ENCODE measurements at regions of chr6 and their contacts with region 1.

Region 1: DNA sequence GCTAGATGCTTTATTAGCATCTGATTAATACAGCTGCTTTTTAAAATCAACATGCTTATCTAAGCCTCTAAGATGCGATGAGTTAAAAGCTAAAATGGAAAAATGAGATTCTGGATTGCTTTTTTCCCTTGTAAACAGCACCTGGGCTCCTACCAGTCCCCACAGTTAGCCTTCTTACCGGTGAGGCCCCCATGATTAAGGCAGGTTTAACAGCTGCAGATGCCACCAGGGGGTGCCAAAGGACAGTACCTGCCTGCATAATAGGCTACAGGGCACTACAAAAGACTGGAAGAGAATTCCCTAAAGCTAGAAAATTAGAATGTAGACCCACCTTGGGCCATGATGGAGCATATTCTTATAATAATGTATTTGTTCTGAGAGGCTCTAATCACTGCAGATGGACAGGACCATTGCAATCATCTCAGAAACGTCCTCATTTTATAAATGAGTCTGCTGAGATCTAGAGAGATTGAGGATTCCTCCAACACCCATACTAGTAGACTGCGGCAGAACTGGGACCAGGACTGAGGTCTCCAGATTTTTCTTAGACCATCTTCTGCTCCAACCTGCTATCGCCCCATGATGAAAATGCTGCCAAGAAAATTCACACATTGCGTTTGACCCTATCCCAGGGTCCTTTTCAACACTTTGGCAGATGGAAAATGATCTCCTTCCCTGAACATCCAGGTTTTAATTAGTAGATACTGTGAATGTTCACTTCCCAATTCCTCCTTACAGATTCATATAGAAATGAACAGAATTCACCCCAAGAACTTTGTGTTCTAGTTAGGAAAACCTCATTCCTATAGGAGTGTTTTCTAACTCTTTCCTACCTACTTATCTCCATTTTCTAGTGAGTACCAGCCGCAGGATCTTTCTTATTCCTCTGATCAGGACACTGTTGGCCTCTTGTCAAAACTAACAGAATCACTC is 148.8 kb downstream of the RPS12 start:
- DNase-seq: no peak
- ATAC-seq: peak; percentile 97
- H3K4me3 ChIP-seq: no peak overlapping the region
- H3K27ac ChIP-seq: no peak overlapping the region
- H3K4me1 ChIP-seq: no peaks in the 10 kb centered on the region; the same call in 1 of the 2 replicates
- H3K27me3 ChIP-seq: no peaks in the 10 kb centered on the region
- CTCF ChIP-seq: peak; percentile 71 to 82 (median 73)
- EP300 ChIP-seq: no peak
- POLR2A ChIP-seq: no peak
- RAD21 ChIP-seq: peak; percentile 76

Region 2: GRCh38 chr6:132530293-132530974 is 432.8 kb before region 1 on chr6:
- CTCF ChIA-PET with region 1: interaction called, 3 read pairs
- POLR2A ChIA-PET with region 1: no interaction called
- RAD21 ChIA-PET with region 1: no interaction called
- SMC1A ChIA-PET with region 1: interaction called, 3 read pairs
- in situ Hi-C with region 1: no loop called
- intact Hi-C with region 1: loop called (anchors 1 kb)
- DNase-seq: peak; percentile 21
- ATAC-seq: peak; percentile 96
- H3K4me3 ChIP-seq: no peak overlapping the region
- H3K27ac ChIP-seq: no peak overlapping the region
- H3K4me1 ChIP-seq: no peaks in the 10 kb centered on the region
- H3K27me3 ChIP-seq: no peaks in the 10 kb centered on the region; a peak in 1 of 4 replicates
- CTCF ChIP-seq: peak; percentile 57 to 74 (median 60); a peak in 5 of 6 replicates
- EP300 ChIP-seq: no peak
- POLR2A ChIP-seq: no peak
- RAD21 ChIP-seq: peak; percentile 91

Region 3: GRCh38 chr6:132952031-132952867 is 11.0 kb before region 1 on chr6:
- CTCF ChIA-PET with region 1: interaction called, 15 read pairs
- POLR2A ChIA-PET with region 1: no interaction called
- RAD21 ChIA-PET with region 1: no interaction called
- SMC1A ChIA-PET with region 1: interaction called, 3 read pairs
- in situ Hi-C with region 1: no loop called
- intact Hi-C with region 1: no loop called
- DNase-seq: no peak
- ATAC-seq: no peak
- H3K4me3 ChIP-seq: no peak overlapping the region
- H3K27ac ChIP-seq: no peak overlapping the region
- H3K4me1 ChIP-seq: no peaks in the 10 kb centered on the region
- H3K27me3 ChIP-seq: peaks cover 0 to 2% of the 10 kb centered on the region in 2 experiments; a peak in 1 of 4 replicates
- CTCF ChIP-seq: no peak
- EP300 ChIP-seq: no peak
- POLR2A ChIP-seq: no peak
- RAD21 ChIP-seq: no peak

Region 4: GRCh38 chr6:133040094-133040802 is 77.0 kb after region 1 on chr6:
- CTCF ChIA-PET with region 1: interaction called, 3 read pairs
- POLR2A ChIA-PET with region 1: no interaction called
- RAD21 ChIA-PET with region 1: no interaction called
- SMC1A ChIA-PET with region 1: interaction called, 3 read pairs
- in situ Hi-C with region 1: no loop called
- intact Hi-C with region 1: loop called (anchors 5 kb)
- DNase-seq: no peak
- ATAC-seq: peak; percentile 38; the same call in 1 of the 3 replicates
- H3K4me3 ChIP-seq: no peak overlapping the region
- H3K27ac ChIP-seq: no peak overlapping the region
- H3K4me1 ChIP-seq: no peaks in the 10 kb centered on the region
- H3K27me3 ChIP-seq: no peaks in the 10 kb centered on the region
- CTCF ChIP-seq: peak in 2 of 3 experiments; percentile 26 to 34; a peak in 3 of 6 replicates
- EP300 ChIP-seq: no peak
- POLR2A ChIP-seq: no peak
- RAD21 ChIP-seq: peak; percentile 27

Region 5: GRCh38 chr6:133553652-133554051 is 590.5 kb after region 1 on chr6:
- CTCF ChIA-PET with region 1: no interaction called
- POLR2A ChIA-PET with region 1: no interaction called
- RAD21 ChIA-PET with region 1: no interaction called
- SMC1A ChIA-PET with region 1: interaction called, 4 read pairs
- in situ Hi-C with region 1: loop called (anchors 10 kb)
- intact Hi-C with region 1: loop called (anchors 2 kb)
- DNase-seq: no peak
- ATAC-seq: peak; percentile 79
- H3K4me3 ChIP-seq: no peak overlapping the region
- H3K27ac ChIP-seq: no peak overlapping the region
- H3K4me1 ChIP-seq: no peaks in the 10 kb centered on the region
- H3K27me3 ChIP-seq: peaks cover 0 to 2% of the 10 kb centered on the region in 2 experiments; a peak in 1 of 4 replicates
- CTCF ChIP-seq: peak; percentile 43 to 62 (median 58); a peak in 5 of 6 replicates
- EP300 ChIP-seq: no peak
- POLR2A ChIP-seq: no peak
- RAD21 ChIP-seq: peak; percentile 64